HEK293 (cell line): ENCODE measurements at regions of chr10 and their contacts with region 1.

Region 1: DNA sequence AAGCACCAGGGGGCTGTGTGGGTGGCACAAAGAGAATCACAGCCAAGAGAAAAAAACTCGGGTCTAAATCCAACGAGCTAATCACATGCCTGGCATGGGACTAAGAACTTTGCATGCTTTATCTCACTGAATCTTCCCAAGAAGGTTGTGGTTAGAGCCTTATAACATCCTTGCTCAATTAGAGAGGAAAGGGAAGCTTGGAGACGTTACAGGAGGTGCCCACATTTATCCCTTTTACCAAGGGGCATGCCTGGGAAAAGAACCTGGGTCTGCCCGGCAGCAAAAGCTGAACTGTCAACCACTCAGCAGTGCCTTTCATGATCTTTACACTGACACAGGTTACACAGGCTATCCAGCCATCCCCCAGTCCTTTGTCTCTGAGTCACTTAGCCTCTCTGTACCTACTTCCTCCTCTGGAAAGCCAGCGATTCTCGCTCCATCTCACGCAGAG is 190.1 kb downstream of the PRPF18 start:
- H3K4me3 ChIP-seq: no peak overlapping the region
- H3K27ac ChIP-seq: no peak overlapping the region
- H3K4me1 ChIP-seq: no peaks in the 10 kb centered on the region
- CTCF ChIP-seq: no peak

Region 2: GRCh38 chr10:13528123-13528874 is 248.6 kb before region 1 on chr10:
- CTCF ChIA-PET with region 1: no interaction called
- POLR2A ChIA-PET with region 1: no interaction called
- H3K4me3 ChIP-seq: peak overlapping the region; percentile 57
- H3K27ac ChIP-seq: peak overlapping the region; percentile 75; the same call in 1 of the 2 replicates
- H3K4me1 ChIP-seq: peaks cover 2% of the 10 kb centered on the region; the same call in 1 of the 2 replicates
- CTCF ChIP-seq: no peak

Region 3: DNA sequence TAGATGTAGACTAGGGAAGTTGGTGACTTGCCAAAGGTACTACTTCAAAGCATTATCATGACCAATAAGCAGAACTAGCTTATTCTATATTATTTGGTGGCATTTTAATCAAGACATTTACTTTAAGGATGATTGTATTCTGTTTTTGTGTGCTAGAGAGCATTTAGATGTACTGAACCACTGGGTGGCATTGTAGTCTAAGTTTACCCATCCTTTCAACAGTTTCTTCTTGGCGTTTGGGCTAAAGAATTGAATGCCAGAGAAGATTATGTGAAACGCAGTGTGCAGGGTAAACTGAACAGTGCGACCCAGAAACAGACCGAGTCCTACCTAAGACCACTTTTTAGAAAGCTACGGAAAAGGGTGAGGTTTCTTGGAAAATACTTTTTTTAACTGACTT is 163.4 kb before region 1 on chr10:
- CTCF ChIA-PET with region 1: interaction called, 11 read pairs
- POLR2A ChIA-PET with region 1: no interaction called
- H3K4me3 ChIP-seq: no peak overlapping the region
- H3K27ac ChIP-seq: no peak overlapping the region
- H3K4me1 ChIP-seq: no peaks in the 10 kb centered on the region
- CTCF ChIP-seq: peak; percentile 42; the same call in 1 of the 2 replicates

Region 4: DNA sequence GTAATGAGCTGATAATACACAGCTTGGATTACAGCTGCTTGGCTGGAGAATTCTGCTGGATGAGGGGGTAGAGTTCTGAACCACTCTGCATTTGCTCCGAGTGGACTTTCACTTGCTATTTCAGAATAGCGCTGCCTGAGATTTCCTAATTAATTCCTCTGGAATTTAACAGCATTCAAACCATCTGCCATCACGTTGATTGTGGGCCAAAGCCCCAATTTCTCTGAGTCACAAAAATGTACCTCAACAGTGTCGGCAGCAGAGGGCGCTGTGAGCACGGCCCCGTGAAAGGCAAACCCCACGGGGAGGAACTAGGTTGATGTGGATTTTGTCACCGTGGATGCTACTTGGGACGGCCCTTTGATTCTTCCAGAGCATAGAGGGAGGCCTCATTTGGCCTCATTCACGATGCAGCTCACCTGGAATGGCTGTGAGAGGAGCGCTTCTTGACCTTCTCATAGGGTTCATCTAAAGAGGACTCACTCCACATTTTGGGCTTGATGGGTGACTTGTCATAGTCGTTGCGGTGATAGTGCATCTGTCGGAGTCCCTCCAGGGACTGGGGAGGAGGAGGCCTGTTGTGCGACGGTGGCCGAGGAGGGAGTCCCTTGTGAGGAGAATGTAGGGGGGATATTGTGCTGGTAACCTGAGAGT is 116.9 kb before region 1 on chr10:
- CTCF ChIA-PET with region 1: interaction called, 28 read pairs
- POLR2A ChIA-PET with region 1: no interaction called
- H3K4me3 ChIP-seq: no peak overlapping the region
- H3K27ac ChIP-seq: no peak overlapping the region
- H3K4me1 ChIP-seq: no peaks in the 10 kb centered on the region
- CTCF ChIP-seq: peak; percentile 65

Region 5: GRCh38 chr10:13758312-13758711 is 18.6 kb before region 1 on chr10:
- CTCF ChIA-PET with region 1: interaction called, 10 read pairs
- POLR2A ChIA-PET with region 1: no interaction called
- H3K4me3 ChIP-seq: no peak overlapping the region
- H3K27ac ChIP-seq: peak overlapping the region; percentile 51
- H3K4me1 ChIP-seq: 0 out of 2 replicates have a peak, but pooled peaks cover 15% of the 10 kb centered on the region
- CTCF ChIP-seq: no peak